MCF 10A (cell line): ENCODE measurements at regions of chr19 and their contacts with region 1.

Region 1: GRCh38 chr19:44512326-44513298 is 12.3 kb upstream of the ZNF180 start:
- DNase-seq: peak; percentile 67
- H3K4me3 Mint-ChIP-seq: no peak overlapping the region
- H3K27ac Mint-ChIP-seq: no peak overlapping the region
- H3K4me1 Mint-ChIP-seq: no peaks in the 10 kb centered on the region
- H3K27me3 Mint-ChIP-seq: peaks cover 43% of the 10 kb centered on the region
- CTCF ChIP-seq: peak; percentile 45

Region 2: GRCh38 chr19:44176590-44176989 is 336.0 kb before region 1 on chr19:
- CTCF ChIA-PET with region 1: no interaction called
- POLR2A ChIA-PET with region 1: no interaction called
- intact Hi-C with region 1: no loop called
- DNase-seq: no peak
- H3K4me3 Mint-ChIP-seq: no peak overlapping the region
- H3K27ac Mint-ChIP-seq: no peak overlapping the region
- H3K4me1 Mint-ChIP-seq: no peaks in the 10 kb centered on the region
- H3K27me3 Mint-ChIP-seq: no peaks in the 10 kb centered on the region
- CTCF ChIP-seq: no peak

Region 3: DNA sequence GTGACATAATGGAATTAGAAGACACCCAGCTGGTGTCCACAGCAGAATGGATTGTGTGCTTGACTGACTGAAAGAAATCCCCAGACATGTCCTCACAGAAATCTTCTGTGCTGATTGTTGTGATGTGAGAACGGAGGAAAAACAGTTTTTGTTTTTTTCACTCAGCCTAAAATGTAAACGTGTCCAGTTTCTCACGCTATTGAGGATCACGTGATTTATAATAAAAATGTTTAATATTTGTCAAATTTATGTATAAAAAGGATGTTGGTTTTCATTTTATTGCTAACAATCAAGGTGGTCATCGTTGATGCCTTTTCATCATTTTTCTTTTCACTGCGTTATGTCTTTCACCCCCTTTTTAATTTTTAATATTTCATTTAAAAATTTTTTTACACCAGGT is 52.4 kb before region 1 on chr19:
- CTCF ChIA-PET with region 1: no interaction called
- POLR2A ChIA-PET with region 1: no interaction called
- intact Hi-C with region 1: no loop called
- DNase-seq: no peak
- H3K4me3 Mint-ChIP-seq: no peak overlapping the region
- H3K27ac Mint-ChIP-seq: no peak overlapping the region
- H3K4me1 Mint-ChIP-seq: no peaks in the 10 kb centered on the region
- H3K27me3 Mint-ChIP-seq: no peaks in the 10 kb centered on the region
- CTCF ChIP-seq: no peak

Region 4: GRCh38 chr19:44539236-44539826 is 26.7 kb after region 1 on chr19:
- CTCF ChIA-PET with region 1: interaction called, 16 read pairs
- POLR2A ChIA-PET with region 1: no interaction called
- intact Hi-C with region 1: no loop called
- DNase-seq: peak; percentile 38
- H3K4me3 Mint-ChIP-seq: no peak overlapping the region
- H3K27ac Mint-ChIP-seq: no peak overlapping the region
- H3K4me1 Mint-ChIP-seq: peaks cover 10% of the 10 kb centered on the region
- H3K27me3 Mint-ChIP-seq: peaks cover 43% of the 10 kb centered on the region
- CTCF ChIP-seq: no peak

Region 5: GRCh38 chr19:44582581-44583265 is 70.1 kb after region 1 on chr19:
- CTCF ChIA-PET with region 1: no interaction called
- POLR2A ChIA-PET with region 1: no interaction called
- intact Hi-C with region 1: loop called (anchors 2 kb)
- DNase-seq: peak; percentile 55
- H3K4me3 Mint-ChIP-seq: no peak overlapping the region
- H3K27ac Mint-ChIP-seq: no peak overlapping the region
- H3K4me1 Mint-ChIP-seq: peaks cover 12% of the 10 kb centered on the region
- H3K27me3 Mint-ChIP-seq: no peaks in the 10 kb centered on the region
- CTCF ChIP-seq: peak; percentile 56